ENCODE measurements at regions of chr2 and their contacts with region 1.

Region 1: DNA sequence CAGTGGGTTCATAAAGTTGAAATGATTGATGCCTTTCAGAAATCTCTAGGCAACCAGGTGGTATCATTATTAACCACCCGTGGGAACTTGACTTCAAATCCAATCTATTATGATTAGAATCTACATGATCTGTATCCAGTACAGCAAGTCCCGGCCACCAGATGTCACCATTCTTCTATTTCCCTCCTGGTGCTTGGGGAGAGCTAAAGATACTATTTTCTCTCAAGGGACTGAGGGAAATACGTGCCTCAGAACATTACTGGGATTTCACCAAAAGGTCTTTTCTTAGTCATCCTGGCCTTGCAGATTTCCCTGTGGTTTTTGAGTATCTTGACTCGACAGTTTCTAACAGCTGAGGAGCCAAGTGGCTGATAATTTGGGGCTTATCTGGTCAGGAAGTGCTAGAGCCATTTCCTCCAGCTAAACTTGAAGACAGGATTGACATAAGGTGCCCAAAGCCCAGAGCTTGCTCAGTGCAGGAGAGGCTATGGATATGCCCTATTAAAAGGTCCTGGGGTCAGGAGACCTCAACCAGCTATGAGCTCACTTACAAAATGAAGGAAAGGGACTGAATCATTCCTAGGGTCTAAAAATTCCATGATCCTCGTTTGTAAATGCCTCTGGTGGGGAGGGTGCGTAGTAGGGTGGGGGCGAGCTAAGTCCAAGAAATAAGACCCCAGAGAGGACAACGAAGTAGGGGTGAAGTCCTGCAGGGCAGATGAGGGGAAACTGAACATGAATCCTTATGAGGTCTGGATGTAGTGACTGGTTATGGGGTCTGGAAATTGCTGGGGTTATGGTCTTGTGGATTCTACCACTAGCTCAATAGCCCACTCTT is 135.4 kb upstream of the MGAT5 start:
- DNase-seq: peak in 1 of 2 experiments; percentile 64
- H3K4me3 ChIP-seq: no peak overlapping the region
- H3K27ac ChIP-seq: no peak overlapping the region
- H3K4me1 ChIP-seq: peaks cover 6 to 18% (median 14%) of the 10 kb centered on the region in 4 experiments; a peak in 6 of 7 replicates
- H3K27me3 ChIP-seq: peaks cover 0 to 3% (median 0%) of the 10 kb centered on the region in 4 experiments; a peak in 1 of 7 replicates
- CTCF ChIP-seq: peak in 2 of 3 experiments; percentile 75 to 83; a peak in 3 of 4 replicates
- EP300 ChIP-seq: no peak
- POLR2A ChIP-seq: no peak
- RAD21 ChIP-seq: peak; percentile 95 to 97

Region 2: DNA sequence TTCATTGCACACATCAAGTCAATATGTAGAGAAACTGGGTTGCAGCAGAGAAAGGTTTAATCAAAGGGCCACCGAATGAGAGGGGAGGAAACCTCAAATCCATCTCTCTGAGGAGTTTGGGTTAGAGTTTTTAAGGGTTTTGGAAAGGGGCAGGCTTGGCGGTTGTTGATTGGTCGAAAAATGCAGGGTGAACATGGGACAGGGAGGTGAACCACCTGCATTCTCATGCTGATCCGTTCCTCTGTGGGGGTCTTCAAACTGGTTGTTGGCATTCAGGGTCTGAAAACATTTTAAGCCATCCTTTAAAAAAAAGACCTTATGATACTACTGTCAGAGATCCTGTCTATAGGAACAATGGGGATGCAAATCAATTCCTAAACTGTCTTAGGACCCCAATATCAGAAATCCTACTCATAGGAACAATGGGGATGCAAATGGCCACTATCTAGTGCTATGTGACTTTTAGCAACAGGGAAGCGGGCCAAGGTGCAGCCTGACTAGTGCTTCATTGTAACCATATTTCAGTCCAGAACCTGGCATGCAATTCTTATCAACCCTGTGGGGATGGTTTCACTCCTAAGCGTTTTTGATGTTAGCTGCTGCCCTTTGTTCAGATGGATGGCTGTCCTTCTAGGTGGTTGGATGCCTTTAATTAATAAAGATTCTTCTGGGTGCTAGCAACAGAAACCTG is 15.3 kb after region 1 on chr2:
- CTCF ChIA-PET with region 1: interaction called, 12 read pairs
- POLR2A ChIA-PET with region 1: interaction called, 3 read pairs
- DNase-seq: no peak
- H3K4me3 ChIP-seq: peak overlapping the region in 2 of 4 experiments; percentile 12 to 35; a peak in 4 of 8 replicates
- H3K27ac ChIP-seq: peak overlapping the region; percentile 44; the same call in 1 of the 2 replicates
- H3K4me1 ChIP-seq: peaks cover 3 to 25% (median 18%) of the 10 kb centered on the region in 4 experiments; a peak in 5 of 7 replicates
- H3K27me3 ChIP-seq: no peaks in the 10 kb centered on the region
- CTCF ChIP-seq: no peak
- EP300 ChIP-seq: no peak
- POLR2A ChIP-seq: no peak
- RAD21 ChIP-seq: no peak

Region 3: GRCh38 chr2:134232868-134233727 is 114.6 kb after region 1 on chr2:
- CTCF ChIA-PET with region 1: interaction called, 22 read pairs
- POLR2A ChIA-PET with region 1: no interaction called
- DNase-seq: no peak
- H3K4me3 ChIP-seq: no peak overlapping the region
- H3K27ac ChIP-seq: no peak overlapping the region
- H3K4me1 ChIP-seq: no peaks in the 10 kb centered on the region
- H3K27me3 ChIP-seq: no peaks in the 10 kb centered on the region; a peak in 2 of 7 replicates
- CTCF ChIP-seq: no peak
- EP300 ChIP-seq: no peak
- POLR2A ChIP-seq: no peak
- RAD21 ChIP-seq: no peak

Region 4: DNA sequence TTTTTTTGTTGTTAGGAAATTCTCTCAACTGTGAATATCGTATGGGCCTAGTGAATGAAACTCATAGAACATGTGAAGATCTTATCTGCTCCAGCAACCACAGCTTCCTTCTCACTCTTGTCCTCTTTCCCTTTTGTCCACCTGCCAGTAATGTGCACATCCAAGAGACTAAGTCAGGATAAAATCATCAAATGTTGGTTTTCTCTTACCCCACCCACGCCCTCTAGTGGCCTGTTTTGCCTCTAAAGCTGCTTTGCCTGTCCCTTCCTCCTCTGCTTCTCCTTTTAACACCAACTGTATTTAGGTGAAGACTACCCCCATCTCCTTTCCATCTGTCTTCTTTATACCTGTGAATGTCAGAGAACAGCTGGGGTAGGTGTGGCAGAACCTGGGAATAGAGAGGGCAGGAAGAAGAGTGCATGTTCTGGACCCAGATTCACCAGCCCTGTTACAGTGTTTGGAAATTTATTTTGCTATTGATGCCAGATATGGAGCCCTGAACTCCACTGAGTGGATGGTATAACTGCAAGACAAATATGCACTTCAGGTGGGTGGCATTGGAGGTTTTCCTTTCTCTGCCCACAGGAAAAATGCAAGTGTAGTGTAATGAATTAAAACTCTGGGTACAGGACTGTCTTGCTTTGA is 127.0 kb after region 1 on chr2:
- CTCF ChIA-PET with region 1: interaction called, 79 read pairs
- POLR2A ChIA-PET with region 1: interaction called, 3 read pairs
- DNase-seq: peak in 1 of 2 experiments; percentile 87
- H3K4me3 ChIP-seq: no peak overlapping the region
- H3K27ac ChIP-seq: no peak overlapping the region
- H3K4me1 ChIP-seq: peaks cover 0 to 6% (median 0%) of the 10 kb centered on the region in 4 experiments; a peak in 1 of 7 replicates
- H3K27me3 ChIP-seq: no peaks in the 10 kb centered on the region
- CTCF ChIP-seq: peak; percentile 49 to 90 (median 59)
- EP300 ChIP-seq: no peak
- POLR2A ChIP-seq: no peak
- RAD21 ChIP-seq: peak; percentile 66 to 72

Measured in H1 (cell line).